Activated B cell treated with CpG ODN at 0.5 μM for 24 hours (primary cell): ENCODE measurements at regions of chr22 and their contacts with region 1.

Region 1: GRCh38 chr22:33271390-33272161 is 213.4 kb upstream of the SYN3 start:
- DNase-seq: peak; percentile 45
- ATAC-seq: peak; percentile 90
- H3K4me3 Mint-ChIP-seq: peak overlapping the region; percentile 64
- H3K27ac Mint-ChIP-seq: peak overlapping the region; percentile 81
- H3K4me1 Mint-ChIP-seq: peaks cover 83% of the 10 kb centered on the region
- H3K27me3 Mint-ChIP-seq: no peaks in the 10 kb centered on the region
- CTCF ChIP-seq: no peak

Region 2: DNA sequence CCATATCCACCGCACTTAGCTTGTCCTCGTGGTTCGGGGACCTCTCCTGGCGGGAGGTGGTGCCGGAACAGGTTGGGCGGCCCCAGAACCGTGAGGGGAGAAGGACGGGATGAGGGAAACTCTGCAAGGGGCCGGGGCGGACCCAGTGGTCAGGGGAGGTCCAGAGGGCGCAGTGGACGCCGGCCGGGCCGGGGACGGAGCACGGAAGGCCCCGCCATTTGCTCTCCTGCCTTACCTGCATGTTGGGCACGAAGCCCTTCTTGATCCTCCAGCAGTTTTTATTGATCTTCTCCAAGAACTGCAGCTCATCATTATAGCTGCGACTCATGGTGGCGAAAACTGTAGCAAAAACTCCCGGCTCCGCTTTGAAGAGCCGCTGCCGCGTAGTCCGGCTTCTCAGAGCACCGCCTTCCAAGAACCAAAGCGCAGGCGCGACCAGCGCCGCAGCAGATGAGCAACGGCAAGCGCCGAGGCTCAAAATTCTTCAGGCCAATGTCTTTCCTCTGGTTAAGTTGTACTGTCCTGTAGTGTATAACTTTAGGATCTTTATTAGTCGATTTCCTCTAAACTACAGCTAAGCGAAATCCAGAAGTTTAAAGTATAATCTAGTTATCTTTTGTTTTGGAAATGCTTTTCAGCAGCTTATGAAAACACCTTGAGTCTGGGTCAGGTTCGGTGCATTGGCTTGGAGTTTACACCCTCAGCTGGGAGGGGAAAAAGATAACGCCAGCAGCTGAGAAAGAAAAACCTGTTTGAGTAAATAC is 859.6 kb before region 1 on chr22 and contains the start of gene RTCB:
- CTCF ChIA-PET with region 1: no interaction called
- POLR2A ChIA-PET with region 1: no interaction called
- intact Hi-C with region 1: loop called (anchors 5 kb)
- DNase-seq: peak; percentile 93
- ATAC-seq: peak; percentile 65
- H3K4me3 Mint-ChIP-seq: peak within 1 kb of the TSS; percentile 97
- H3K27ac Mint-ChIP-seq: peak within 1 kb of the TSS; percentile 97
- H3K4me1 Mint-ChIP-seq: peaks cover 56% of the 10 kb centered on the region
- H3K27me3 Mint-ChIP-seq: peaks cover 7% of the 10 kb centered on the region
- CTCF ChIP-seq: no peak
- total RNA-seq, gene RTCB: 112 and 119 TPM in 2 replicates

Region 3: DNA sequence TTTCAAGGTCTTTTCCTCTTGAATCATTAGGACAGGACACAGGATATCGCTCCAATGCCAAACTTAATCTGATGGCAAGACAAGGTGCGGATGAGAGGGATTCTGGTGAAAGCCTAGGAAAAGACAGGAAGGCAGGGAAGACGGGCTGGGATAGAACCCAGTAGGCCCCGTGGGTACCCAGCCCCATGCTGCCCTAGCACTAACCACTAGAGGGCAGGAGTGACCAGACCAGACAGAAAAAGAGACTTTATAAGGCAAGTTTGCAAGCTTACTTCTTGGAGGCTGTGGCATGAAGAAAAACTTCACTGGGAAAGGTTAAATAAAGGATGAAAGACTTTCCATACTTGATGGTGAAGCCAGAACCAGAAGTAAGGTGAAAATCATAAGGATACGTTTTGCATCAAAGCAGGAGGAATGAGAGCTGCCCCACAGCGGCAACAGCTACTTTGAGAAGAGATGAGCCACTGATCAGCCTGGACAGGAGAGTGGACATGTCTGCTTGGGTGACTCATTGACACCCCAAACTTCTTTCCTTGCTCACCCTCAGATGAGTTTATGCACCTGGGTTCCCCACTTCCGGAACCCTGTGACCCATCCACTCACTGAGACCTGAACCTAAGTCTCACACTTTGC is 253.2 kb before region 1 on chr22:
- CTCF ChIA-PET with region 1: interaction called, 37 read pairs
- POLR2A ChIA-PET with region 1: no interaction called
- intact Hi-C with region 1: loop called (anchors 1 kb)
- DNase-seq: peak; percentile 48
- ATAC-seq: peak; percentile 75
- H3K4me3 Mint-ChIP-seq: no peak overlapping the region
- H3K27ac Mint-ChIP-seq: no peak overlapping the region
- H3K4me1 Mint-ChIP-seq: peaks cover 21% of the 10 kb centered on the region
- H3K27me3 Mint-ChIP-seq: no peaks in the 10 kb centered on the region
- CTCF ChIP-seq: peak; percentile 78

Region 4: GRCh38 chr22:33202455-33202854 is 69.1 kb before region 1 on chr22:
- CTCF ChIA-PET with region 1: no interaction called
- POLR2A ChIA-PET with region 1: no interaction called
- intact Hi-C with region 1: loop called (anchors 5 kb)
- DNase-seq: no peak
- ATAC-seq: no peak
- H3K4me3 Mint-ChIP-seq: no peak overlapping the region
- H3K27ac Mint-ChIP-seq: no peak overlapping the region
- H3K4me1 Mint-ChIP-seq: peaks cover 35% of the 10 kb centered on the region
- H3K27me3 Mint-ChIP-seq: no peaks in the 10 kb centered on the region
- CTCF ChIP-seq: no peak

Region 5: GRCh38 chr22:33255791-33256190 is 15.8 kb before region 1 on chr22:
- CTCF ChIA-PET with region 1: interaction called, 3 read pairs
- POLR2A ChIA-PET with region 1: no interaction called
- intact Hi-C with region 1: loop called (anchors 2 kb)
- DNase-seq: no peak
- ATAC-seq: no peak
- H3K4me3 Mint-ChIP-seq: peak overlapping the region; percentile 12
- H3K27ac Mint-ChIP-seq: peak overlapping the region; percentile 30
- H3K4me1 Mint-ChIP-seq: peaks cover 33% of the 10 kb centered on the region
- H3K27me3 Mint-ChIP-seq: no peaks in the 10 kb centered on the region
- CTCF ChIP-seq: no peak

Region 6: GRCh38 chr22:33325235-33326004 is 53.8 kb after region 1 on chr22:
- CTCF ChIA-PET with region 1: no interaction called
- POLR2A ChIA-PET with region 1: interaction called, 3 read pairs
- intact Hi-C with region 1: loop called (anchors 2 kb)
- DNase-seq: no peak
- ATAC-seq: peak; percentile 87
- H3K4me3 Mint-ChIP-seq: peak overlapping the region; percentile 63
- H3K27ac Mint-ChIP-seq: peak overlapping the region; percentile 86
- H3K4me1 Mint-ChIP-seq: peaks cover 64% of the 10 kb centered on the region
- H3K27me3 Mint-ChIP-seq: no peaks in the 10 kb centered on the region
- CTCF ChIP-seq: no peak

Region 7: DNA sequence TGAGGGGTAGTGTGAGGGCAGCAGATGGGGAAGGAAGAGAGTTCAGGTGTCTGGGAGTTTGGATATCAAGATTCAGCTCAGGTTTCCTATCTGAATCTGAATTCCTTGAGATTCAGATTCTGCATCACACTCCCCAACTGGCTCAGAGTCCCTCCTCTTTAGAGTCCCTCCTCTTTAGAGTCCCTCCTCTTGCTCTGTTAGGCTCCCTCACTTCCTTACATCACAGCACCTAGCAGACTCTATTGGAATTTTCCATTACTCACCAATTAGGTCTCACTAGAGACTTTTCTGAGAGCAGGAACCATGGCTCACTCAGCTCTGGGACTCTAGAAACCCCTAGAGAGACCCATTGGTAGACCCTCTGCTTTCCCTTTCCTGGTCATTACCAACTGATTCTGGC is 90.0 kb after region 1 on chr22:
- CTCF ChIA-PET with region 1: no interaction called
- POLR2A ChIA-PET with region 1: no interaction called
- intact Hi-C with region 1: no loop called
- DNase-seq: no peak
- ATAC-seq: peak; percentile 75
- H3K4me3 Mint-ChIP-seq: no peak overlapping the region
- H3K27ac Mint-ChIP-seq: no peak overlapping the region
- H3K4me1 Mint-ChIP-seq: peaks cover 24% of the 10 kb centered on the region
- H3K27me3 Mint-ChIP-seq: no peaks in the 10 kb centered on the region
- CTCF ChIP-seq: no peak

Region 8: GRCh38 chr22:33565580-33565995 is 294.0 kb after region 1 on chr22:
- CTCF ChIA-PET with region 1: no interaction called
- POLR2A ChIA-PET with region 1: interaction called, 9 read pairs
- intact Hi-C with region 1: loop called (anchors 1 kb)
- DNase-seq: no peak
- ATAC-seq: no peak
- H3K4me3 Mint-ChIP-seq: no peak overlapping the region
- H3K27ac Mint-ChIP-seq: peak overlapping the region; percentile 8
- H3K4me1 Mint-ChIP-seq: peaks cover 81% of the 10 kb centered on the region
- H3K27me3 Mint-ChIP-seq: no peaks in the 10 kb centered on the region
- CTCF ChIP-seq: no peak